ENCODE measurements at regions of chr15 and their contacts with region 1.

Region 1: GRCh38 chr15:97909291-97909891 is 51.1 kb upstream of the ARRDC4 start:
- DNase-seq: peak; percentile 63
- H3K4me3 ChIP-seq: no peak overlapping the region
- H3K27ac ChIP-seq: no peak overlapping the region
- H3K4me1 ChIP-seq: no peaks in the 10 kb centered on the region
- H3K27me3 ChIP-seq: peaks cover 0 to 4% of the 10 kb centered on the region in 2 experiments
- CTCF ChIP-seq: peak; percentile 87 to 90
- POLR2A ChIP-seq: no peak

Region 2: DNA sequence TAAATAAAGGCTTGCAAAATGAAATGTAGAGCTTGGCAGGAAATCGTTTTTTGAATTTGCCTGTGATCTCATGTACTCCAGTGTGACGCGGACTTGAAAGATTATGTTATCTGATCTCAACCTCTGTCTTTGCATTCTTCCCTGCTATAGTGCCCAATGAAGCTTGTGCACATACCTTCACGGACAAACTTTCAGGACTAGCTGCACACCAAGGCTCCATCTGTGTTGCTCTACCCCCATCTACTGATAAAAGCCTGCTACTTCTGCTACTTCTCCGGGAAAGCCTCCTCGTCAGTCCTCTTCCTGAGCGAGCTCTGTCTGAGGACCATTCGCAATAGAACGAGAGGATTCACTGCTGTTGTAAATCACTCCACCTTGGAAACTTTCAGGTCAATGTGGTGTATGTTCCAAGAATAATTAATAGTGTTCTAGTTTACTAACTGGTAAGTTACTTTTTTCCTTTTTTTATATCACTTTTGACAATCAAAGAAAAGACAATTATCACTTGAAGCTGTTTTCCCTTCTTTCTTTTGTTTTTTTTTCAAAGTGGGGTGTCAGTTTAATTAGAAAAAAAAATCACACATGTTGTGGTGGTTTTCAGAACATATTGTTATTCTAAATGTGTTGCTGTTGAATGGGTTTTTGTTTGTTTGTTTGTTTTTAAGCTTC is 268.7 kb after region 1 on chr15:
- CTCF ChIA-PET with region 1: no interaction called
- POLR2A ChIA-PET with region 1: no interaction called
- dilution Hi-C with region 1: no loop called
- intact Hi-C with region 1: loop called (anchors 1 kb)
- DNase-seq: peak; percentile 53
- H3K4me3 ChIP-seq: no peak overlapping the region
- H3K27ac ChIP-seq: no peak overlapping the region
- H3K4me1 ChIP-seq: no peaks in the 10 kb centered on the region
- H3K27me3 ChIP-seq: no peaks in the 10 kb centered on the region
- CTCF ChIP-seq: peak; percentile 32 to 39
- POLR2A ChIP-seq: no peak

Region 3: GRCh38 chr15:98292442-98293240 is 383.2 kb after region 1 on chr15:
- CTCF ChIA-PET with region 1: interaction called, 4 read pairs
- POLR2A ChIA-PET with region 1: no interaction called
- dilution Hi-C with region 1: no loop called
- intact Hi-C with region 1: loop called (anchors 1 kb)
- DNase-seq: peak; percentile 6
- H3K4me3 ChIP-seq: no peak overlapping the region
- H3K27ac ChIP-seq: no peak overlapping the region
- H3K4me1 ChIP-seq: no peaks in the 10 kb centered on the region
- H3K27me3 ChIP-seq: no peaks in the 10 kb centered on the region
- CTCF ChIP-seq: peak; percentile 62 to 77
- POLR2A ChIP-seq: no peak

Region 4: GRCh38 chr15:98421419-98422129 is 512.2 kb after region 1 on chr15:
- CTCF ChIA-PET with region 1: interaction called, 3 read pairs
- POLR2A ChIA-PET with region 1: no interaction called
- dilution Hi-C with region 1: no loop called
- intact Hi-C with region 1: loop called (anchors 2 kb)
- DNase-seq: peak; percentile 36
- H3K4me3 ChIP-seq: no peak overlapping the region
- H3K27ac ChIP-seq: no peak overlapping the region
- H3K4me1 ChIP-seq: no peaks in the 10 kb centered on the region
- H3K27me3 ChIP-seq: peaks cover 6 to 18% of the 10 kb centered on the region in 2 experiments
- CTCF ChIP-seq: peak; percentile 97 to 99
- POLR2A ChIP-seq: no peak